Right cardiac atrium (tissue), 5 donors: ENCODE measurements at regions of chr1 and their contacts with region 1.

Region 1: GRCh38 chr1:165073185-165074007 is 283.1 kb downstream of the LMX1A start:
- DNase-seq: no peak
- ATAC-seq: peak; percentile 55 to 61
- H3K4me3 ChIP-seq: no peak overlapping the region
- H3K27ac ChIP-seq: no peak overlapping the region
- H3K4me1 ChIP-seq: no peaks in the 10 kb centered on the region
- H3K27me3 ChIP-seq: no peaks in the 10 kb centered on the region

Region 2: DNA sequence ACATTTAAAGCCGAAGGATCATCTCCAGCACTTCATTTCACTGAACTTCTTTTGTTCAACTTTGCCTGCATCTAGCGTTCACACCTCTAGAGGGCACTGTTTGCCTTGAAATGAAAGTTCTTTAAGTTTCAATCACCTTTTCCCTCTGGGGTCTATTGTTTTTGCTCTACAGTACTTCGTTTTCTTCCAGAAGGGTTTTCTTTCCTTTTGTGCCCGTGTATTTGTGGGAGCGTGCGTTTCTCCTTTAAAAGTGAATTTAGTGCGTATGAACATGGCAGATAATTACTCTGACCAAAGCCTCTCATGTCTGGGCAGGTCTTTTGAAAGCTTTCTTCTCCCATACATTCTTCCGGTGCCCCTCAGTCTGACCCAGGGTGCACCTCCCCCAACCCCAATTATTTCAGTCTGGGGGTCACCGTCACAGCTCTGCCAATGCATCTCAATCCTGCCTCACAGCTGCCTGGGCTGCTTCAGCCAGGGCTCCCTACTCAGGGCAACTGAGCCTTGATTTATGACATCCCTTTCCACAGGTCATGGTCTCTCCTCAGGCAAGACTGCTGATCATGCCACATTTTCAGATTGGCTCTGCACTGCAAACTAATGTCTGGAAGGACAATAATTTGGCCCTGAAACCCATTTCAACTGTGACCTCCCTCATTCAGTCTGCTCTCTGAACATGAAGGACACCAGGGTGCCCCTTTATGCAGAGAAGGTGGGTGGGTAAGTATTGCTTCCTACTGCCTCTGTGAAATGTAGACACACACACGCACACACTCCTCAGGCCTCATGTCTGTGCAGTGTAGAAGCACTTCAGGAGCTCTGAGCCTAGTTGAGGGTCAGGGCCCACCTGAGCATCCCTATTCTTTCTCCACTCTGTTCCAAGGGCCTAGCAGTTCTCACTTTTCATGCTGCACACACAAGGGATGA is 1663.1 kb before region 1 on chr1:
- intact Hi-C with region 1: loop called in 1 of 4 experiments (anchors 10 kb)
- DNase-seq: peak in 2 of 3 donors; percentile 16 to 49
- ATAC-seq: no peak
- H3K4me3 ChIP-seq: no peak overlapping the region
- H3K27ac ChIP-seq: no peak overlapping the region
- H3K4me1 ChIP-seq: no peaks in the 10 kb centered on the region
- H3K27me3 ChIP-seq: no peaks in the 10 kb centered on the region

Region 3: GRCh38 chr1:163528710-163529348 is 1544.6 kb before region 1 on chr1:
- intact Hi-C with region 1: loop called in 3 of 4 experiments (anchors 10 kb)
- DNase-seq: peak in 2 of 3 donors; percentile 18 to 56
- ATAC-seq: no peak
- H3K4me3 ChIP-seq: no peak overlapping the region
- H3K27ac ChIP-seq: no peak overlapping the region
- H3K4me1 ChIP-seq: no peaks in the 10 kb centered on the region
- H3K27me3 ChIP-seq: no peaks in the 10 kb centered on the region

Region 4: DNA sequence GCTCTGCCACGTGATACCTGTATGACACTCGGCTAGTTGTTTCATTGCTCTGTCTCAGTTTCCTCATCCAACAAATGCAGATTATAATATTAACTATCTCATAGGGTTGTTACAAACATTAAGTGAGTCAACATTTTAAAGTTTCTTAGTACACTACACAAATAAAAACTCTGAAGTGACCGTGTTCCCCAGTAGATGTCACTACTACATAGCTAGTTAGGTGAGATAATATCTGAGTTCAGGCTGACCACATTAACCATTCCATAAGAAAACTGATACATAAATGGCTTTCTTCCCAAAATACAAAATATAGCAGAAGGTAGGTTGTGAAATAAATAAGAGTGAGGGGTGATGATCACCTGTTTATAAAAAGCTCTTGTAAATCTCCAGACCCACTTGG is 1537.6 kb before region 1 on chr1:
- intact Hi-C with region 1: loop called in 2 of 4 experiments (anchors 10 kb)
- DNase-seq: no peak
- ATAC-seq: no peak
- H3K4me3 ChIP-seq: no peak overlapping the region
- H3K27ac ChIP-seq: no peak overlapping the region
- H3K4me1 ChIP-seq: no peaks in the 10 kb centered on the region
- H3K27me3 ChIP-seq: no peaks in the 10 kb centered on the region